Motor neuron (in vitro differentiated cells): ENCODE measurements at regions of chr12 and their contacts with region 1.

Region 1: GRCh38 chr12:42299392-42300308 is 26.2 kb downstream of the ZCRB1 start:
- ATAC-seq: peak in 4 of 8 experiments; percentile 45 to 58 (median 50)
- H3K4me3 ChIP-seq: no peak overlapping the region
- H3K27ac ChIP-seq: no peak overlapping the region
- H3K4me1 ChIP-seq: no peaks in the 10 kb centered on the region

Region 2: DNA sequence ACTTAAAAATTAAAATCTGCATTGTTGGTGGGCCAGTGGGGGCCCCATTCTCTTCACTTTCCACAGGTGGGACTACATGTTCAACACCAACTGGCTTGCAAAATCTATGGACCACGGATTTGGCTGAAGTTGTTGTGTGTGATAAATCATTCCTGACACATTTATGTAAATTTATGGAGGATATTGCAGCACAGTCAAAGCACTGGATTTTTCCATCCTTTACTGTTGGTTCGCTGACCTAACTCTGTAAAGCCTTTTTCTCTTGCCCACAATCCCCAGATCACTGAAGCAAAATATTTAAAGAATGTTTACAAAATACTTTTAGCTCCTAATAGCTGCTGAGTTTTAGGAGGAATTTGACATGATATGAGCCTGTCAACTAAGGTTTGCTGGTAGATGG is 509.6 kb after region 1 on chr12:
- in situ Hi-C with region 1: no loop called
- ATAC-seq: no peak
- H3K4me3 ChIP-seq: no peak overlapping the region
- H3K27ac ChIP-seq: no peak overlapping the region
- H3K4me1 ChIP-seq: no peaks in the 10 kb centered on the region

Region 3: DNA sequence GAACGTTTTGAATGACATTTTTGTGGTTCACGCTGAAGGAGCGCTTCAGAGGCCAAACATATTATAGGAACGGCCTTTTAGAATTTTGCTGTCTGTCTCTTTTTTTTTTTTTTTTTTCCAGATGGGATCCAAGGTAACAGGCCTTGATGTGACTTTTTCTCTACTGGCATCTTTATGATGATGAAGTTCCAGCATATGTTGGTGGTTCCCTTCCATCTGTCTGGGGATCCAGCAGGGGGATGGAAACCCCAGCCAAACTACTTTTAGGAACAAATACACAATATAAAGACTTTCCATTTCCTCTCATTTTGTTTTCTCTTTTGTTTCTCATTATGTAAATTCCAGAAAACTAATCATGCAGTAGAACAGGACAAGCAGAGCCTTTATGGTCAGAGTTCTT is 529.2 kb after region 1 on chr12:
- in situ Hi-C with region 1: no loop called
- ATAC-seq: no peak
- H3K4me3 ChIP-seq: no peak overlapping the region
- H3K27ac ChIP-seq: no peak overlapping the region
- H3K4me1 ChIP-seq: no peaks in the 10 kb centered on the region

Region 4: DNA sequence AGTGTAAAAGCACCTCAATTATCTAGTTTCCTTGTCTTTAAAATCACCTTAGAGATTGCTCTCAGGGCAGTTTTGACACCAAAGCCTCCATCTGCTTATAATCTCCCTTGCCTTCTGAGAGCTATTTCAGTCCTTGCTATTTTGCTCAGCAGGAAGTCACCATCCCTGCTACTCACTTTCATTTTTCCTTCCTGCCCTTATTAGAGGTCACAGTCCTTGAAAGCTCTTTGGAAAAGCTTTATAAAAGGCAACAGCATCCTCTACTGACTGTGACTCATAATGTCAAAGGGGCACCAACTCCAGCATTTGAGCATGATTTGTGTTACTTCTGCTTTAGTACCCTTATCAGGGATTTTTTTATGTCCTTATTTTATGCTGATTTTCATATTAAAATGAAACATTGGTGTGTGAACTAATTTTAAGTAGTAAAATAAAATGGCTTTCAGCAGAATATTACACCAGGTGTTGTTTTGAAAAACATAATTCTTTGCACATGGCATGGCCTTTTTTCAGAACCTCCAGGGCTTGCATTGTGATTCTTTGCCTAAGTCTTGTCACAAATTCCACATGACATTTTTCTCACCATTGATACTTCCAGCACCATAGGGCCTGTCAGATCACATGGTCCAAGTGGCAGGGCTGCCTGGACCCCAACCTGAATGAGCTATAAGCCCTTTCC is 1039.3 kb after region 1 on chr12:
- in situ Hi-C with region 1: loop called in 1 of 9 experiments (anchors 25 kb)
- ATAC-seq: peak; percentile 75 to 96 (median 90)
- H3K4me3 ChIP-seq: no peak overlapping the region
- H3K27ac ChIP-seq: no peak overlapping the region
- H3K4me1 ChIP-seq: no peaks in the 10 kb centered on the region